CD4-positive, alpha-beta memory T cell (primary cell): ENCODE measurements at regions of chr1 and their contacts with region 1.

Region 1: DNA sequence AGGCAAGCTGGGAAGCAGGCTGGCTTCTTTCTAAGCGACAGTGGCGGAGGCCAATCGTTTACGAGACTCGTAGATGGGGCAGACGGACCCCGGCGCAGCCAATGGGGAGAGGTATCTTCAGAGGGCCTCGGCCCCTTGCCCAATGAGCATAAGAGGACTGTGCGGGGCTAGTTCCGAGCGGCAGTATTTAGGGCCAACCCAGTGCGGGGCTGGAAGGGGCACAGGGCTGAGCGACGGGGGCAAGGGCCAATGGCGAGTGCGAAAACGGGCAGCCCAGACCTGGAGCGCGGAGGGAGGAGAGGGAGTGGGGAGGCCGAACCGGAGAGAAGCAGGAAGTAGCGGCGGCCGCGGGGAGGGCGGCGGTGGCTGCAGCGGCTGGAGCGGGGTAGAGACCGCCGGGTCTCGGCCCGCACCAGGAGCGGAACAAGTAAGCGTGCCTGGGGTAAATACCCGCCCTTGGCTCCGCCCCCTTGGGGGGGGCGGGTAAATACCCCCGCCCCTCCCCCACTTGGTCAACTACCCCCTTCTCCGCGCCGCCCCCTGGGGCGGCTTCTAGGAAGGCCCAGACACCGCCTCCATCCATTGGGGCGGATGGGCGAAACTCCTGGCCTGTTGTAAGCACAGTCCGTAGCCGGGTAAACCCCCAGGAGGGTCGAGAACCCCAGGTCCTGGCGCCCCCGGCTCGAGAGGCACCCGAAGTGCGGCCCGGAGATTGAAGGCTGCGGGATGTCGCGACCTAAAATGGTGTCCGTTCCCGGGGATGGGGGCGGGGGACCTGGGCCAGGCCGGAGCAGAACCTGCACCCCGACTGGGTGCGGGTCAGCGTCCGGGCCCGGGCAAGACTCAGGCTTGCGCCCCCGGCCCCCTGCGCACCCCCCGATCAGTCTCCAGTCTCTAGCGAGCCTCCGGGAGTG is at the start of gene ZNF687:
- DNase-seq: peak; percentile 99
- H3K4me3 ChIP-seq: peak within 1 kb of the TSS; percentile 71 to 99
- H3K4me3 Mint-ChIP-seq: peak within 1 kb of the TSS; percentile 95 to 99 (median 98)
- H3K27ac ChIP-seq: peak within 1 kb of the TSS; percentile 94
- H3K27ac Mint-ChIP-seq: peak within 1 kb of the TSS; percentile 96 to 100 (median 99)
- H3K4me1 ChIP-seq: peaks cover 25% of the 10 kb centered on the region
- H3K4me1 Mint-ChIP-seq: peaks cover 14 to 47% (median 33%) of the 10 kb centered on the region in 4 donors
- H3K27me3 ChIP-seq: no peaks in the 10 kb centered on the region
- H3K27me3 Mint-ChIP-seq: no peaks in the 10 kb centered on the region
- total RNA-seq, gene ZNF687: 39.2 to 39.3 TPM

Region 2: GRCh38 chr1:151189638-151190445 is 92.4 kb before region 1 on chr1 and contains the start of gene VPS72:
- CTCF ChIA-PET with region 1: interaction called, 3 read pairs
- POLR2A ChIA-PET with region 1: interaction called, 15 read pairs
- intact Hi-C with region 1: loop called (anchors 1 kb)
- DNase-seq: peak; percentile 81 to 92 (median 84)
- H3K4me3 ChIP-seq: peak within 1 kb of the TSS; percentile 67 to 78
- H3K4me3 Mint-ChIP-seq: peak within 1 kb of the TSS; percentile 92 to 100 (median 98)
- H3K27ac ChIP-seq: peak within 1 kb of the TSS; percentile 89
- H3K27ac Mint-ChIP-seq: peak within 1 kb of the TSS; percentile 91 to 100 (median 98)
- H3K4me1 ChIP-seq: peaks cover 25% of the 10 kb centered on the region
- H3K4me1 Mint-ChIP-seq: peaks cover 22 to 43% (median 33%) of the 10 kb centered on the region in 4 donors
- H3K27me3 ChIP-seq: no peaks in the 10 kb centered on the region
- H3K27me3 Mint-ChIP-seq: no peaks in the 10 kb centered on the region
- total RNA-seq, gene VPS72: 68.1 to 68.4 TPM

Region 3: GRCh38 chr1:151292207-151293030 is 10.2 kb after region 1 on chr1:
- CTCF ChIA-PET with region 1: interaction called, 4 read pairs
- POLR2A ChIA-PET with region 1: interaction called, 43 read pairs
- intact Hi-C with region 1: no loop called
- DNase-seq: no peak
- H3K4me3 ChIP-seq: no peak overlapping the region
- H3K4me3 Mint-ChIP-seq: no peak overlapping the region
- H3K27ac ChIP-seq: no peak overlapping the region
- H3K27ac Mint-ChIP-seq: peak overlapping the region in 4 of 7 donors; percentile 17 to 84 (median 59)
- H3K4me1 ChIP-seq: no peaks in the 10 kb centered on the region
- H3K4me1 Mint-ChIP-seq: peaks cover 2 to 9% (median 8%) of the 10 kb centered on the region in 4 donors
- H3K27me3 ChIP-seq: no peaks in the 10 kb centered on the region
- H3K27me3 Mint-ChIP-seq: no peaks in the 10 kb centered on the region

Region 4: DNA sequence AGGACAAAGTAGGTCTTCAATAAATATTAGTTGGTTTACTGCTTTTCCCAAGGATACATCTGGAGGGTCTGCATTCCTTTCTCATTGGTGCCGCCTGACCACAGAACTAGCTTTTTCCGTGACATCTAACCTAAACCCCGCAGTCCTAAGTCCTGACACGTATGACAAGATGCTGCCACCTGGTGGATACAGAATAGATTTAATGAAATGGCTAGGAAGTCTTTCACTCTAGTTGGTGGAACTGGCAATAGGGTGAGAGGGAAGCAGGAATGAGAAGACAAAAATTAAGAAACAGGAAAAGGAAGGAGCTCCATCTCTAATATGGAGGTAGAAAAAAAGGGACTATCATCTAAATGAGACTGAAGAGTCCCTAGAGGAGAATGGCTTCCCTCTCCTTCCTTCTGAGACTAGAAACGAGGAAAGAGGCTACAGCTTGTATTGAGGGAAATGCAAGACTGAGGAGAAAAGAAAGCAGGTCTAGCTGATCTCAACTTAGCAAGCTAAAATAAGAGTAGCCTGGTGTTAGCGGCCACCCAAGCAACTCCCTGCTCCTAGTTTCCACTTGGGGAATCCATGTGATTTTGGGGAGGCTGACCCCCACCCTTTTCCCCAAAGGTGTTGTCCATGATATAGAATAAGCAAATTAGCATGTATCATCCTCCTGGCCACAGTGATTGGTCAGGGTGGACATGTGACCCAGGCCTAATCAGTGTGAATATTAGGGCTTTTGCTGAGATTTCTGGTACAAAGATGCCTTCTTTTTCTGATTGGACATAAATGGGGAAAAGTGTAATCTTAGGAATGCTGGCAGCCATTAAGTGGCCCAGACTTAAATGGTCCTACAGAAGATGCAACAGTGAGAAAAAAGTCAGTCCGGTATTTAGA is 58.9 kb after region 1 on chr1:
- CTCF ChIA-PET with region 1: interaction called, 56 read pairs
- POLR2A ChIA-PET with region 1: interaction called, 10 read pairs
- intact Hi-C with region 1: loop called (anchors 1 kb)
- DNase-seq: peak; percentile 66 to 75 (median 69)
- H3K4me3 ChIP-seq: no peak overlapping the region
- H3K4me3 Mint-ChIP-seq: peak overlapping the region in 2 of 8 donors; percentile 4 to 22
- H3K27ac ChIP-seq: peak overlapping the region; percentile 31
- H3K27ac Mint-ChIP-seq: peak overlapping the region; percentile 1 to 83 (median 52)
- H3K4me1 ChIP-seq: peaks cover 21% of the 10 kb centered on the region
- H3K4me1 Mint-ChIP-seq: peaks cover 17 to 29% (median 21%) of the 10 kb centered on the region in 4 donors
- H3K27me3 ChIP-seq: no peaks in the 10 kb centered on the region
- H3K27me3 Mint-ChIP-seq: no peaks in the 10 kb centered on the region

Region 5: GRCh38 chr1:151399890-151400495 is 117.8 kb after region 1 on chr1:
- CTCF ChIA-PET with region 1: interaction called, 4 read pairs
- POLR2A ChIA-PET with region 1: interaction called, 7 read pairs
- intact Hi-C with region 1: loop called (anchors 1 kb)
- DNase-seq: peak in 2 of 5 donors; percentile 22 to 41
- H3K4me3 ChIP-seq: peak overlapping the region; percentile 80 to 85
- H3K4me3 Mint-ChIP-seq: peak overlapping the region; percentile 90 to 99 (median 95)
- H3K27ac ChIP-seq: peak overlapping the region; percentile 97
- H3K27ac Mint-ChIP-seq: peak overlapping the region; percentile 86 to 100 (median 99)
- H3K4me1 ChIP-seq: peaks cover 23% of the 10 kb centered on the region
- H3K4me1 Mint-ChIP-seq: peaks cover 14 to 31% (median 18%) of the 10 kb centered on the region in 4 donors
- H3K27me3 ChIP-seq: no peaks in the 10 kb centered on the region
- H3K27me3 Mint-ChIP-seq: no peaks in the 10 kb centered on the region

Region 6: DNA sequence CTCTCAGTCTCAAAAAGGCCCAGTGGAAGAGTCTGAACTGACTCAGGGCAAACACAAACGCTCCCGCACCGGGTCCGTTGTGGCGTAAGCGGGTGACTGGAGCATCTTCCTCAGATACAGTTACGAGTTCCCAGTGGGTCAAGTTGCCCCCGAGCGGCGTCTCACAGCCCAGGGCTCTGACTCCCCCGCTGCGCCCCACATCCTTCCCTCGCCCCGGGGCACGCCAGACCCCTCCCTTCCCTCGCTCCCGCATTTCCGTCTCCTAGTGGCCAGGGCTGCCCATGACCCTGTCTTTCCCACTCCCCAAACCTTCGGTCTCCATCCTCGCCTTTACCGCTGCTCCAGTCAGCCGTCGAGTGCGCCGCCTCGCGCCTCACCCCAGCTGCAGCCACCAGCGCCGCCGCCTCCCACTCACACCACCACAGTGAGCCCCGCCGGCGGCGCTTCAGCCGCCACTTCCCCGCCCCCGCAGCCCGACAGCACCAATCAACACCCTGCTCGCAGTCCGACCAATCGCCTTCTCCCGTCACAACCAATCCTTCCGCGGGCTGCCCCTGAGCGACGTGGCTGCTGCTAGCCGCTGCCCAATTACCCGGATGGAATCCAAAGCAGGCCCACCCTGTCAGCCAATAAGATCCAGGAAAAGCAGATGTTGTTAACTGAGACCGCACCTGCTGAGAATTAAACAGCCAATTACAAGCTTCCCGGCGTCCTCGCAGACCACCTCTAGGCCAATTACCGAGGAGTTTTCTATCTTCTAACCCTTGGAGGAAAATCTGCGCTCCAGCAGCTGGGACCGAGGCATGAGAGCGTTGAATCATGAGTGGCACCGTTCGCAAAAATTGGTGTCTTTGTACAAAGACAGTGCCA is 508.1 kb after region 1 on chr1 and contains the start of gene TDRKH:
- CTCF ChIA-PET with region 1: no interaction called
- POLR2A ChIA-PET with region 1: no interaction called
- intact Hi-C with region 1: loop called (anchors 2 kb)
- DNase-seq: peak; percentile 98 to 100 (median 99)
- H3K4me3 ChIP-seq: peak within 1 kb of the TSS; percentile 86 to 100
- H3K4me3 Mint-ChIP-seq: peak within 1 kb of the TSS; percentile 91 to 99 (median 96)
- H3K27ac ChIP-seq: peak within 1 kb of the TSS; percentile 51
- H3K27ac Mint-ChIP-seq: peak within 1 kb of the TSS; percentile 85 to 98 (median 90)
- H3K4me1 ChIP-seq: peaks cover 29% of the 10 kb centered on the region
- H3K4me1 Mint-ChIP-seq: peaks cover 21 to 41% (median 34%) of the 10 kb centered on the region in 4 donors
- H3K27me3 ChIP-seq: no peaks in the 10 kb centered on the region
- H3K27me3 Mint-ChIP-seq: no peaks in the 10 kb centered on the region
- total RNA-seq, gene TDRKH: 29.1 to 29.3 TPM